ENCODE measurements at regions of chr6 and their contacts with region 1.

Region 1: GRCh38 chr6:106097411-106098231 is 11.5 kb downstream of the PRDM1 start:
- DNase-seq: peak; percentile 72
- H3K4me3 Mint-ChIP-seq: peak overlapping the region; percentile 89
- H3K27ac Mint-ChIP-seq: peak overlapping the region; percentile 96
- H3K4me1 Mint-ChIP-seq: peaks cover 91% of the 10 kb centered on the region
- H3K27me3 Mint-ChIP-seq: no peaks in the 10 kb centered on the region

Region 2: GRCh38 chr6:105484238-105485161 is 613.1 kb before region 1 on chr6:
- intact Hi-C with region 1: loop called (anchors 1 kb)
- DNase-seq: no peak
- H3K4me3 Mint-ChIP-seq: peak overlapping the region; percentile 27
- H3K27ac Mint-ChIP-seq: peak overlapping the region; percentile 59
- H3K4me1 Mint-ChIP-seq: peaks cover 72% of the 10 kb centered on the region
- H3K27me3 Mint-ChIP-seq: peaks cover 7% of the 10 kb centered on the region

Region 3: GRCh38 chr6:105810105-105810921 is 287.3 kb before region 1 on chr6:
- intact Hi-C with region 1: loop called (anchors 1 kb)
- DNase-seq: peak; percentile 73
- H3K4me3 Mint-ChIP-seq: peak overlapping the region; percentile 58
- H3K27ac Mint-ChIP-seq: peak overlapping the region; percentile 92
- H3K4me1 Mint-ChIP-seq: peaks cover 76% of the 10 kb centered on the region
- H3K27me3 Mint-ChIP-seq: no peaks in the 10 kb centered on the region

Region 4: DNA sequence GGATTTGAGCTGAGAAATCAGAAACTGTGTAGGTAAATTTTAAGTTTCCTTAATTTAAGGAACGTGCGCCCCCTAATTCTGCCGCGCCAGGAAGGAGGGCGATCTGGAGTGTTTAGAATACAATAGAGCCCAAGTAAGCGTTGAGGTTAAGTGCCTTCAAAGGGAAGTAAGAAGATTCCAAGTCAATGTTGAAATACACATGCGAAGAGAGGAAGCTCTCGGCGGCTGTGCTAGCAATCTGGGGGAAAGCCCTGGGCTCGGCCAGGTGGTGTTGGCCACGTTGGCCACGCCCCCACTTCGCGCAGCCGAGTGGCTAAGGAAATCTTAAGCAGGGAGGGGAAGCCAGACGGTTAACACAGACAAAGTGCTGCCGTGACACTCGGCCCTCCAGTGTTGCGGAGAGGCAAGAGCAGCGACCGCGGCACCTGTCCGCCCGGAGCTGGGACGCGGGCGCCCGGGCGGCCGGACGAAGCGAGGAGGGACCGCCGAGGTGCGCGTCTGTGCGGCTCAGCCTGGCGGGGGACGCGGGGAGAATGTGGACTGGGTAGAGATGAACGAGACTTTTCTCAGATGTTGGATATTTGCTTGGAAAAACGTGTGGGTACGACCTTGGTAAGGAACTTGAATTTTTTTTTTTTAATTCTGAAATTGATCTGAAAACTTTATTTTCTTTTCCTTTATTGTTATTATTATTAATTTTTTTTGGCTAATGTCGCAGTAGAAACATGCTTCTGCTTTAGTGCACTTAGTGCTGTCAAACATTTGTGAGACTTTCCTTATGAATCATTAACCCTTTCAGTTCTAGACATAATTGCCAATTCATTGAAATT is 11.4 kb before region 1 on chr6 and contains the start of gene PRDM1:
- intact Hi-C with region 1: loop called (anchors 1 kb)
- DNase-seq: peak; percentile 83
- H3K4me3 Mint-ChIP-seq: peak within 1 kb of the TSS; percentile 96
- H3K27ac Mint-ChIP-seq: peak within 1 kb of the TSS; percentile 80
- H3K4me1 Mint-ChIP-seq: peaks cover 86% of the 10 kb centered on the region
- H3K27me3 Mint-ChIP-seq: peaks cover 7% of the 10 kb centered on the region
- total RNA-seq, gene PRDM1: 74.1 and 78.8 TPM in 2 replicates

Region 5: DNA sequence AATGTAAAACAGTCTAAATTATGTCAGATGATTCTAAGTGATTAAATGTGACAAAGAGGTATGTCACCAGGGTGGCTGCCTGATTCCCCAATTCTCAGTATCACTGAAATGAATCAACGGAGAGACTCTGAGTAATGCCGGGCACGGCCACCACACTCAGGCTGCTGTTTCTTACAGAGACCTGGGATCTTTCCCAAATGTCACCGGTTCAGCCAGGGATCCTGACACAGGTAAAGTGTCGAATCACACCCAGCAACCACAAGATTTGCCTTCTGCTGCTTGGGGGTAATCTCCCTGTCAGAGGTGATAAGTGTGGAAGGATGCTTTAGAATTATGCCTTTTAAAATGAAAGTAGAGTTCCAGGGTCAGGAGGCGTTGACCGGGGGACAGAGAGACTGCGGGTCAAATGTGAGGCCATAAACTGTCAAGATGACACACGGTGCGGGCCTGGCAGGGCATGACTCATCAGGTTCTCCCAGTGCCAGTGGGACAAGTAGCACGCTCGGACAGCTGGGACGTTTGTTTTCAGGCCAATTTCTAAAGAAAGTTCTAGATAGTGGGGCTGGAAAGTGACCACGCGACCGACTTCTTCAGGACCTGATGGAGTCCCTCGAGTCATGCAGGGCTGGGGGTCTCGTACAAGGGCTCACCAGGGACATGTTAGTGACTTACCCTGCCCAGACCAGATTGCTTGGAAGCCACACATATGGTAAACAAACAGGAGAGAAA is 37.4 kb after region 1 on chr6:
- intact Hi-C with region 1: no loop called
- DNase-seq: no peak
- H3K4me3 Mint-ChIP-seq: no peak overlapping the region
- H3K27ac Mint-ChIP-seq: no peak overlapping the region
- H3K4me1 Mint-ChIP-seq: peaks cover 31% of the 10 kb centered on the region
- H3K27me3 Mint-ChIP-seq: no peaks in the 10 kb centered on the region

Region 6: GRCh38 chr6:106163446-106163965 is 65.9 kb after region 1 on chr6:
- intact Hi-C with region 1: loop called (anchors 1 kb)
- DNase-seq: peak; percentile 49
- H3K4me3 Mint-ChIP-seq: peak overlapping the region; percentile 69
- H3K27ac Mint-ChIP-seq: peak overlapping the region; percentile 98
- H3K4me1 Mint-ChIP-seq: peaks cover 73% of the 10 kb centered on the region
- H3K27me3 Mint-ChIP-seq: peaks cover 3% of the 10 kb centered on the region

Region 7: DNA sequence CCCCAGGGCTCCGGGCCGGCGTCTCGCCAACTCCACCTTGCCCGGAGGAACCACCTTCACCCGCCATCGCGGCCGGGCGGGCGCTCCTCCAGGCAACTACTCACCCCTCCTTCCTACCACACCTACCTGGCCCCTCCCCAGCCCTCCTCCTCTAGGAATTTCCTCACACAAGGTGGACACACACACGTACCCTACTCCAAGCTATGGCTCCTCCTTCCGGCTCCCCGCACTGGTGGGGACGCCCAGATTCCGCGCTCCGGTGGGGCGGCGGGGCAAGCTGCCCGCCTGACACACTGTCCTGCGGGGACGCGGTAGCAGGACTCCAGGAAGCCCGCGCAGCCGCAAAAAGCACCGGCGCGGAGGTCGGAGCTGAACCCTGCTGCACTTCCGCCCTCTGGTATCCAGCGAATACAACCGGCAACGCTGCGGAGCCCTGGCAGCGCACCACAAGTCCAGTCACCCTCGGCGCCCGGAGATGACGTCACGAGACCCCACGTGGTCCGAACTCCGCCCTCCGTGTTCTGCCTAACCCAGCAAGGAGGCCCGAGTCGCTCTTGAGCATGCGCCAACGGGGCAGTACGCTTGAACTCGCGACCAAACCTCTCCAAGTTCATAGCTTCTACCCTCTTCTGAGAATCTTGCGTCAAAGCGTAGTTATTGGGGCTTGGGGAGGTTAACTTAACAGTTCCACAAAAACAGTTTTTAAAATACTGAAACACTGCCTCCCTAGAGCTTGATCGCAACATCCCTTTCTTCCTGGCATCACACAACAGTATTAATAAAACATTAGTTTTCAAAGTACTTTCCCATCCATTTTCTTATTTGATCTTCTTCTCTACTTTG is 227.9 kb after region 1 on chr6 and contains the start of gene ATG5:
- intact Hi-C with region 1: loop called (anchors 1 kb)
- DNase-seq: peak; percentile 100
- H3K4me3 Mint-ChIP-seq: peak within 1 kb of the TSS; percentile 100
- H3K27ac Mint-ChIP-seq: peak within 1 kb of the TSS; percentile 98
- H3K4me1 Mint-ChIP-seq: peaks cover 35% of the 10 kb centered on the region
- H3K27me3 Mint-ChIP-seq: peaks cover 22% of the 10 kb centered on the region
- total RNA-seq, gene ATG5: 36.0 and 36.7 TPM in 2 replicates